ENCODE measurements at regions of chr11 and their contacts with region 1.

Region 1: DNA sequence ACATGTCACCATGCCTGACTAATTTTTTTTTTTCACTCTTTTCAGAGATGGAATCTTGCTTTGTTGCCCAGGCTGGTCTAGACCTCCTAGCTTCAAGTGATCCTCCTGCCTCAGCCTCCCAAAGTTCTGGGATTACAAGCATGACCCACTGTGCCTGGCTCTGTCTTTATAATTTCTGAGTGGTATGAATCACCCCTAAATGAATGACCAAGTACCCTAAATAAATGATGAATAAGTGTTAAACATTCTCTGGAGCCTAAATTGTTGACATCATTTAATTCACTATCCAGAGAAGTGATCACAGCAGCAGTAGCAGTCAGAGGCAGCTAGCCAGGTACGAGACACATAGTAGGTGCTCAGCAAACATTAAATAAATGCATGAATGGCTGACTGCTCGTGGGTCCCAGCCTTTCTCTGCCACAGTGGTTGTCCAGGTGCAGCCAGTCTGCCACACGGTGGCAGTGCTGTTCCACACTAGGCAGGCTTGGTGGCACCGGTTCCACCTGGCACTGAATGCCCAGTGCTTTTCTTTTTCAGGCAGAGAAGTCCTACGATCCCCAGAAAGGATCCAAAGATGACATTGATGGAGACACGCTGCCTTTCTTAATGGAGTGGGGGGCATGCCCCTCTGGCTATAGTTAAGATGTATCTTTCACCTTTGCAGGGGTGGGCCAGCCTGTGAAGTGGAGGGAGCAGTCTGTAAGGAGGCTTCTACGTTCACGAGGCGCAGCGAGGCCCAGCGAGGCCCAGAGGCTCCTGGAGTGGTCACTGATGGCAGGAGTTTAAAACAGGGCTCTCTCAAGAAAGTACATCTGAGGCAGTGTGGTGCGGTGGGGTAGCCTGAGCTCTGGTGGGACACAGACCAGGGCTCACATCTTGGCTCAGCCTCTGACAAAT is 8.7 kb upstream of the TTC12 start:
- DNase-seq: peak; percentile 56 to 84 (median 68)
- ATAC-seq: peak; percentile 86
- H3K4me3 ChIP-seq: no peak overlapping the region
- H3K4me3 Mint-ChIP-seq: no peak overlapping the region
- H3K27ac ChIP-seq: no peak overlapping the region
- H3K27ac Mint-ChIP-seq: no peak overlapping the region
- H3K4me1 ChIP-seq: no peaks in the 10 kb centered on the region
- H3K4me1 Mint-ChIP-seq: no peaks in the 10 kb centered on the region
- H3K27me3 ChIP-seq: no peaks in the 10 kb centered on the region
- H3K27me3 Mint-ChIP-seq: peaks cover 5% of the 10 kb centered on the region
- CTCF ChIP-seq: peak; percentile 92

Region 2: GRCh38 chr11:113532697-113533424 is 227.2 kb after region 1 on chr11:
- CTCF ChIA-PET with region 1: no interaction called
- POLR2A ChIA-PET with region 1: no interaction called
- intact Hi-C with region 1: loop called in 1 of 2 experiments (anchors 1 kb)
- DNase-seq: peak; percentile 26 to 74 (median 44)
- ATAC-seq: peak; percentile 32
- H3K4me3 ChIP-seq: no peak overlapping the region
- H3K4me3 Mint-ChIP-seq: no peak overlapping the region
- H3K27ac ChIP-seq: no peak overlapping the region
- H3K27ac Mint-ChIP-seq: no peak overlapping the region
- H3K4me1 ChIP-seq: peaks cover 3% of the 10 kb centered on the region
- H3K4me1 Mint-ChIP-seq: no peaks in the 10 kb centered on the region
- H3K27me3 ChIP-seq: no peaks in the 10 kb centered on the region
- H3K27me3 Mint-ChIP-seq: peaks cover 34% of the 10 kb centered on the region
- CTCF ChIP-seq: peak; percentile 69

Region 3: GRCh38 chr11:113730887-113731726 is 425.4 kb after region 1 on chr11:
- CTCF ChIA-PET with region 1: no interaction called
- POLR2A ChIA-PET with region 1: no interaction called
- intact Hi-C with region 1: loop called (anchors 2 to 5 kb)
- DNase-seq: peak in 1 of 14 experiments; percentile 1
- ATAC-seq: no peak
- H3K4me3 ChIP-seq: no peak overlapping the region
- H3K4me3 Mint-ChIP-seq: no peak overlapping the region
- H3K27ac ChIP-seq: no peak overlapping the region
- H3K27ac Mint-ChIP-seq: no peak overlapping the region
- H3K4me1 ChIP-seq: no peaks in the 10 kb centered on the region
- H3K4me1 Mint-ChIP-seq: no peaks in the 10 kb centered on the region
- H3K27me3 ChIP-seq: no peaks in the 10 kb centered on the region
- H3K27me3 Mint-ChIP-seq: no peaks in the 10 kb centered on the region
- CTCF ChIP-seq: no peak

Region 4: DNA sequence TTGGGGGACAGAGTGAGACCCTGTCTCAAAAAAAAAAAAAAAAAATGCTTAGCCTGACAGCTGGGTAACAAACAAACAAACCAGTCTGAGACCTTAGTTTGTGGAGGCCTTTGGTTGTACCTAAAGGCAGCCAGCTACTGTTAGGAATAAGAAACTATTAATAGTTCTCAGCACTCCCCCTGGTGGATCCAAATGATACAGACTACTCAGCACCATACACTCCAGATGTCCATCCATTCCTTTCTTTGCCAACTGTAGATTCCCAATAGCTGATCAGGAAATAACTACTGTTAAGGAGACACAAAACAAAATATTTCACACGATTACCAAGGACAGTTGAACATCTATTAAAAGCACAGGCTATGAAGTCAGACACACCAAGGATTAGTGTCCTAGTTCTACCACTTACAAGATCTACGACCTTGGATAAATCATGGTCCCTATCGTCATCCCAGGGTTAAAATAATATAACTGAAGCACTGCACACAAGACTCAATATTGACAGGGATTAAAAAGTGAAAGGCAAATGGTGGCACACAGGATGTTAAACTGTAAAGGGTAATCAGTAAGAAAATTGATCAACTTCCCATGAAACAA is 491.1 kb after region 1 on chr11:
- CTCF ChIA-PET with region 1: no interaction called
- POLR2A ChIA-PET with region 1: no interaction called
- intact Hi-C with region 1: loop called in 1 of 2 experiments (anchors 2 kb)
- DNase-seq: peak in 4 of 14 experiments; percentile 24 to 53 (median 40)
- ATAC-seq: peak; percentile 59
- H3K4me3 ChIP-seq: no peak overlapping the region
- H3K4me3 Mint-ChIP-seq: no peak overlapping the region
- H3K27ac ChIP-seq: no peak overlapping the region
- H3K27ac Mint-ChIP-seq: no peak overlapping the region
- H3K4me1 ChIP-seq: no peaks in the 10 kb centered on the region
- H3K4me1 Mint-ChIP-seq: no peaks in the 10 kb centered on the region
- H3K27me3 ChIP-seq: no peaks in the 10 kb centered on the region
- H3K27me3 Mint-ChIP-seq: no peaks in the 10 kb centered on the region
- CTCF ChIP-seq: peak; percentile 60

Measured in CD4-positive, alpha-beta T cell (primary cell).